CD4-positive, alpha-beta memory T cell (primary cell): ENCODE measurements at regions of chr4 and their contacts with region 1.

Region 1: DNA sequence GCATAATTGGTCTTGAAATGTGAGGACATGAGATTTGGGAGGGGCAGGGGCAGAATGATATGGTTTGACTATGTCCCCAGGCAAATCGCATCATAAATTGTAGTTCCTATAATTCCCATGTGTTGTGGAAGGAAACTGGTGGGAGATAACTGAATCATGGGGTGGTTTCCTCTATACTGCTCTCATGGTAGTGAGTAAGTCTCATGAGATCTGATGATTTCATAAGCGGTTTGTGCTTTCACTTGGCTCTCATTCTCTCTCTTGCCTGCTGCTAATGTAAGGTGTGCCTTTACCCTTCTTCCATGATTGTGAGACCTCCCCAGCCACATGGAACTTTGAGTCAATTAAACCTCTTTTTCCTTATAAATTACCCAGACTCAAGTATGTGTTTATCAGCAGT is 2595.9 kb downstream of the PCDH7 start:
- DNase-seq: no peak
- H3K4me3 ChIP-seq: no peak overlapping the region
- H3K4me3 Mint-ChIP-seq: no peak overlapping the region
- H3K27ac ChIP-seq: no peak overlapping the region
- H3K27ac Mint-ChIP-seq: no peak overlapping the region
- H3K4me1 ChIP-seq: no peaks in the 10 kb centered on the region
- H3K4me1 Mint-ChIP-seq: no peaks in the 10 kb centered on the region
- H3K27me3 ChIP-seq: no peaks in the 10 kb centered on the region
- H3K27me3 Mint-ChIP-seq: no peaks in the 10 kb centered on the region

Region 2: GRCh38 chr4:32706249-32706648 is 609.8 kb before region 1 on chr4:
- CTCF ChIA-PET with region 1: no interaction called
- POLR2A ChIA-PET with region 1: no interaction called
- intact Hi-C with region 1: no loop called
- DNase-seq: no peak
- H3K4me3 ChIP-seq: no peak overlapping the region
- H3K4me3 Mint-ChIP-seq: no peak overlapping the region
- H3K27ac ChIP-seq: no peak overlapping the region
- H3K27ac Mint-ChIP-seq: no peak overlapping the region
- H3K4me1 ChIP-seq: no peaks in the 10 kb centered on the region
- H3K4me1 Mint-ChIP-seq: no peaks in the 10 kb centered on the region
- H3K27me3 ChIP-seq: no peaks in the 10 kb centered on the region
- H3K27me3 Mint-ChIP-seq: no peaks in the 10 kb centered on the region

Region 3: DNA sequence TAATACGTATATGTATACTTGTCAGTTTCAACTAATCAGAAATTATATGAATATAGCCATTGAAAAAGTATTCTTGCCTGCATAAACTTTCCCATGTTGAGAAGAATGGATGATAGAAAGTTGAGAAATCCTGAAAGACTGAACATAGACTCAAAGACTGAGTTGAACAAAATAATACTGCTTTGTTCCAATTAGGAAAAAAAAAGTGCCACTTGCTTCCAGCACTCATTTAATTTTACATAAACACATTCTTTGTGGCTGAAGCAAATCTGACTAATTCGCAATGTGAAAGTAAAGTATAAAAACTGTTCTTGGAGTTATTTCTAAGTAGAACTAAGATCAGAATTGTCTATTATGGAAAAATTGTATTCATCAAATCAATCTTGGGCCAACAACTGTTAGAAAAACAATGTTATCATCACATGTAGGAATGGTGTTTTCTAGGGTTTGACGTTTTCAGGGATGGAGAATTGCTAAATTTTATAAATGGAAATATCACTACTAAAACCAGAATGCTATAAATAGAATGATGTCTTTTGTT is 261.3 kb before region 1 on chr4:
- CTCF ChIA-PET with region 1: no interaction called
- POLR2A ChIA-PET with region 1: no interaction called
- intact Hi-C with region 1: loop called (anchors 5 kb)
- DNase-seq: no peak
- H3K4me3 ChIP-seq: no peak overlapping the region
- H3K4me3 Mint-ChIP-seq: no peak overlapping the region
- H3K27ac ChIP-seq: no peak overlapping the region
- H3K27ac Mint-ChIP-seq: no peak overlapping the region
- H3K4me1 ChIP-seq: no peaks in the 10 kb centered on the region
- H3K4me1 Mint-ChIP-seq: no peaks in the 10 kb centered on the region
- H3K27me3 ChIP-seq: no peaks in the 10 kb centered on the region
- H3K27me3 Mint-ChIP-seq: no peaks in the 10 kb centered on the region

Region 4: DNA sequence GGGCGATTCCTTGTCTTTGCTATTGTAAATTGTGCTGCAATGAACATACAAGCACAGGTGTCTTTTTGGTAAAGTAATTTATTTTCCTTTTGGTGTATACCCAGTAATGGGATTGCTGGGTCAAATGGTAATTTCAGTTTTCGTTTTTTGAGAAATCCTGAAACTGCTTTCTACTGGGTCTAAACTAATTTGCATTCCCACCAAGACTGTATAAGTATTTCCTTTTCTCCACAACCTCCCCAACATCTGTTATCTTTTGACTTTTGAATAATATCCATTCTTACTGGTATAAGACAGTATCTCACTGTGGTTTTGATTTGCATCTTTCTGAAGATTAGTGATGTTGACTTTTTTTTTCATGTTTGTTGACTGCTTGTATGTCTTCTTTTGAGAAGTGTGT is 89.9 kb before region 1 on chr4:
- CTCF ChIA-PET with region 1: no interaction called
- POLR2A ChIA-PET with region 1: no interaction called
- intact Hi-C with region 1: no loop called
- DNase-seq: no peak
- H3K4me3 ChIP-seq: no peak overlapping the region
- H3K4me3 Mint-ChIP-seq: no peak overlapping the region
- H3K27ac ChIP-seq: no peak overlapping the region
- H3K27ac Mint-ChIP-seq: no peak overlapping the region
- H3K4me1 ChIP-seq: no peaks in the 10 kb centered on the region
- H3K4me1 Mint-ChIP-seq: no peaks in the 10 kb centered on the region
- H3K27me3 ChIP-seq: no peaks in the 10 kb centered on the region
- H3K27me3 Mint-ChIP-seq: no peaks in the 10 kb centered on the region

Region 5: GRCh38 chr4:33302321-33302720 is 13.7 kb before region 1 on chr4:
- CTCF ChIA-PET with region 1: no interaction called
- POLR2A ChIA-PET with region 1: no interaction called
- intact Hi-C with region 1: no loop called
- DNase-seq: no peak
- H3K4me3 ChIP-seq: no peak overlapping the region
- H3K4me3 Mint-ChIP-seq: no peak overlapping the region
- H3K27ac ChIP-seq: no peak overlapping the region
- H3K27ac Mint-ChIP-seq: no peak overlapping the region
- H3K4me1 ChIP-seq: no peaks in the 10 kb centered on the region
- H3K4me1 Mint-ChIP-seq: no peaks in the 10 kb centered on the region
- H3K27me3 ChIP-seq: no peaks in the 10 kb centered on the region
- H3K27me3 Mint-ChIP-seq: no peaks in the 10 kb centered on the region